PC-9 (cell line): ENCODE measurements at regions of chr6 and their contacts with region 1.

Region 1: DNA sequence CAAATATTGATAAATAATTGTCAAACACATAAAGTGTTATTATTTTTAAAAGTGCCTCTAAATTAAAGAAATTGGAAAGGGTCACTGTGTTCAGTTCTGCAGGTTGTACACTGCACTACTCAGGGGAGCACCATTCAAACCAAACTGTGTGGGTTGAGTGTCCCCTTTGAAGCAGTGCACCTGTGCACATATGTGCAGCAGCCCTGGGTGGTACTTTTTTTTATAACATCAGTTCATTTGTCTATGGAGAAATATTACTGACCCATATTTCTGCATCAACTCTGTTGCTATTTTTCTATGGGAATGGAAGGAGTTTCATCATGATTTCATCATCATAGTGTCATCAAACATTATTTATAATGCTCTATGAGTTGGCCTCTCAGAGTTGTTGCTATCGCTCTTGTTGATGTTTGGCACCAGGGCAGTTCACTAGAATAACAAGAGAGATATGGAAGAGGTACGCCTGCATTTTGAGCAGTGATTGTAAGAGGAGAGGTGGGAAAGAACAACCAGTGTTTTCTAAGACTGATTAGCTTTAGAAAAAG is 457.6 kb downstream of the TFAP2A start:
- DNase-seq: no peak
- H3K4me3 ChIP-seq: no peak overlapping the region
- H3K27ac ChIP-seq: no peak overlapping the region
- H3K4me1 ChIP-seq: no peaks in the 10 kb centered on the region
- H3K27me3 ChIP-seq: no peaks in the 10 kb centered on the region
- CTCF ChIP-seq: no peak

Region 2: DNA sequence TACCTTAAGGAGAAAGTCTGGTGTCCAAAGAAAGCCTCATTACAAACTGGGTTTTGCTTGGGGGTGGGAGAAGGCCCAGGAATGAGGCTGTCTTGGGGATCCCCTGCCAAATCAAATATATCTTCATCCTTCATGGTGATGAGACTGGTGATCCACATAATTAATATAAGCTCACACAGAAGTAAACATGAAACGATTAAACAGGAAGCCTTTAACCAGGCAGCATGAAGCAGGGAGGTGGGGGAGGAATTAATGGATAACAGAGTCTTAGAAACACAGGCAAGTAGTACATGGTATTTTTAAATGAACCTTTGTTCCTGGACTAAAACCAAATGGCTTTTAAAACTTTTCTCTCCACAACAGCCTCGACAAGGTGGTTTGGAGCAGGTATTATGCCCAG is 20.1 kb after region 1 on chr6:
- CTCF ChIA-PET with region 1: no interaction called
- POLR2A ChIA-PET with region 1: no interaction called
- intact Hi-C with region 1: loop called (anchors 1 kb)
- DNase-seq: no peak
- H3K4me3 ChIP-seq: no peak overlapping the region
- H3K27ac ChIP-seq: no peak overlapping the region
- H3K4me1 ChIP-seq: no peaks in the 10 kb centered on the region
- H3K27me3 ChIP-seq: no peaks in the 10 kb centered on the region
- CTCF ChIP-seq: no peak

Region 3: GRCh38 chr6:10112871-10113549 is 155.7 kb after region 1 on chr6:
- CTCF ChIA-PET with region 1: no interaction called
- POLR2A ChIA-PET with region 1: no interaction called
- intact Hi-C with region 1: no loop called
- DNase-seq: no peak
- H3K4me3 ChIP-seq: no peak overlapping the region
- H3K27ac ChIP-seq: no peak overlapping the region
- H3K4me1 ChIP-seq: no peaks in the 10 kb centered on the region
- H3K27me3 ChIP-seq: no peaks in the 10 kb centered on the region
- CTCF ChIP-seq: no peak